Natural killer cell (primary cell): ENCODE measurements at regions of chr6 and their contacts with region 1.

Region 1: GRCh38 chr6:31834434-31835198 is 7.1 kb downstream of the HSPA1B start:
- DNase-seq: peak; percentile 78 to 88
- ATAC-seq: peak; percentile 72 to 84 (median 74)
- H3K4me3 ChIP-seq: peak overlapping the region; percentile 97
- H3K4me3 Mint-ChIP-seq: peak overlapping the region; percentile 88
- H3K27ac ChIP-seq: peak overlapping the region; percentile 98
- H3K27ac Mint-ChIP-seq: peak overlapping the region; percentile 94 to 96
- H3K4me1 ChIP-seq: peaks cover 67% of the 10 kb centered on the region
- H3K4me1 Mint-ChIP-seq: peaks cover 47 to 48% of the 10 kb centered on the region in 2 donors
- H3K27me3 ChIP-seq: no peaks in the 10 kb centered on the region
- H3K27me3 Mint-ChIP-seq: no peaks in the 10 kb centered on the region
- CTCF ChIP-seq: no peak

Region 2: GRCh38 chr6:31541658-31542521 is 292.7 kb before region 1 on chr6 and contains the start of gene DDX39B:
- intact Hi-C with region 1: loop called (anchors 5 kb)
- DNase-seq: peak; percentile 85 to 99
- ATAC-seq: peak; percentile 69 to 86 (median 77)
- H3K4me3 ChIP-seq: peak within 1 kb of the TSS; percentile 77
- H3K4me3 Mint-ChIP-seq: peak within 1 kb of the TSS; percentile 99
- H3K27ac ChIP-seq: peak within 1 kb of the TSS; percentile 92
- H3K27ac Mint-ChIP-seq: peak within 1 kb of the TSS; percentile 94 to 96
- H3K4me1 ChIP-seq: peaks cover 36% of the 10 kb centered on the region
- H3K4me1 Mint-ChIP-seq: peaks cover 49 to 56% of the 10 kb centered on the region in 2 donors
- H3K27me3 ChIP-seq: no peaks in the 10 kb centered on the region
- H3K27me3 Mint-ChIP-seq: no peaks in the 10 kb centered on the region
- CTCF ChIP-seq: no peak
- total RNA-seq, gene DDX39B: 506 to 571 (median 534) TPM

Region 3: GRCh38 chr6:31680840-31681671 is 153.6 kb before region 1 on chr6 and contains the start of gene LY6G5C:
- intact Hi-C with region 1: loop called (anchors 1 kb)
- DNase-seq: peak; percentile 58 to 80
- ATAC-seq: peak; percentile 83 to 89 (median 86)
- H3K4me3 ChIP-seq: peak within 1 kb of the TSS; percentile 56
- H3K4me3 Mint-ChIP-seq: peak within 1 kb of the TSS; percentile 93
- H3K27ac ChIP-seq: peak within 1 kb of the TSS; percentile 14
- H3K27ac Mint-ChIP-seq: peak within 1 kb of the TSS; percentile 78 to 79
- H3K4me1 ChIP-seq: peaks cover 30% of the 10 kb centered on the region
- H3K4me1 Mint-ChIP-seq: peaks cover 19 to 23% of the 10 kb centered on the region in 2 donors
- H3K27me3 ChIP-seq: no peaks in the 10 kb centered on the region
- H3K27me3 Mint-ChIP-seq: peaks cover 0 to 3% of the 10 kb centered on the region in 2 donors
- CTCF ChIP-seq: peak; percentile 64
- total RNA-seq, gene LY6G5C: 2.0 to 7.9 (median 2.7) TPM

Region 4: GRCh38 chr6:31739639-31740396 is 94.8 kb before region 1 on chr6 and contains the start of gene MSH5:
- intact Hi-C with region 1: loop called (anchors 2 kb)
- DNase-seq: peak; percentile 95 to 97
- ATAC-seq: peak; percentile 74 to 95 (median 89)
- H3K4me3 ChIP-seq: peak within 1 kb of the TSS; percentile 66
- H3K4me3 Mint-ChIP-seq: peak within 1 kb of the TSS; percentile 97
- H3K27ac ChIP-seq: peak within 1 kb of the TSS; percentile 83
- H3K27ac Mint-ChIP-seq: peak within 1 kb of the TSS; percentile 91 to 99
- H3K4me1 ChIP-seq: peaks cover 44% of the 10 kb centered on the region
- H3K4me1 Mint-ChIP-seq: peaks cover 60 to 71% of the 10 kb centered on the region in 2 donors
- H3K27me3 ChIP-seq: no peaks in the 10 kb centered on the region
- H3K27me3 Mint-ChIP-seq: no peaks in the 10 kb centered on the region
- CTCF ChIP-seq: no peak
- total RNA-seq, gene MSH5: 28.2 to 44.6 (median 43.7) TPM

Region 5: DNA sequence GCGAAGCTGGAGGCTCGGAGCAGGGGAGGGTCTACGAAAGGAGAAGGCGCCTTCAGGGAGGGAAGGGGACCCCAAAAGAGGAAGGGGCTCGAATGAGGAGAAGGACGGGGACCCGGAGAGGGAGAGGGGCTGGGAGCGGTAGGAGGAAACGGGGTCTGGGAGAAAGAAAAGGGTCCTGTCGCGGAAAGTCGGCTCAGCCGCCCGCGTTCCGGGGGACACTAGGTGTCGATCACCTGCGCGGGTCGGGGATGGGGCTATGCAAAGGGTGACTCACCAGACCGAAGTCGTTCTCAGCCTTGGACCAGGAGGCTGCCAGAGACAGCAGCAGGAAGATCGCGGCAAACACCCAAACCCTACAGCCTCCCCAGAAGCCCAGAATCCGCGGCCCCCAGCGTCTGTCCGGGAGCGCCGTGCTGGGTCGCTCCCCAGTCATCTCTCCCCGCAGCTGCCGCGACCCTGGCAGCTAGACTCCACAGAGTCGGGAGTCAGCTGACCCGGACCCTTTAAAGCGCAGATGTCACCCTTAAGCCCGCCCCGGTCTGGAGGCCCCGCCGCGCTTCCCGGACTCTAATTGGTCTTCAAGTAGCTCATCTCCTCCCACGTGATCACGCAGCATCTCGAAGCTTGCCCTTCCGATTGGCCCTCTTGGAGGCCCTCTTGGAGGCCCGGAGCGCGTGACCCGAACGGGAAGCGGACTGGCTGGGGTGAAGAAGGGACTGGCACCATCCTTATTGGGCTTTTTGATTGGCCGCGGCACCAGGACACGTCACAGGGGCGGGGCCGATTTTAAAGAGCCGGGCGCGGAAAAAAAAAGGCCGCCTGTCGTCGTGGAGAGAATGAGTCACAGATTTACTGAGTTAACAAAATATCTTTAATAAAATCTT is 28.0 kb after region 1 on chr6 and contains the start of gene NEU1:
- intact Hi-C with region 1: loop called (anchors 1 kb)
- DNase-seq: peak; percentile 99 to 100
- ATAC-seq: peak; percentile 86 to 98 (median 93)
- H3K4me3 ChIP-seq: peak within 1 kb of the TSS; percentile 89
- H3K4me3 Mint-ChIP-seq: peak within 1 kb of the TSS; percentile 96
- H3K27ac ChIP-seq: peak within 1 kb of the TSS; percentile 91
- H3K27ac Mint-ChIP-seq: peak within 1 kb of the TSS; percentile 97 to 99
- H3K4me1 ChIP-seq: peaks cover 25% of the 10 kb centered on the region
- H3K4me1 Mint-ChIP-seq: peaks cover 20 to 33% of the 10 kb centered on the region in 2 donors
- H3K27me3 ChIP-seq: no peaks in the 10 kb centered on the region
- H3K27me3 Mint-ChIP-seq: no peaks in the 10 kb centered on the region
- CTCF ChIP-seq: no peak
- total RNA-seq, gene NEU1: 36.1 to 69.6 (median 51.5) TPM

Region 6: DNA sequence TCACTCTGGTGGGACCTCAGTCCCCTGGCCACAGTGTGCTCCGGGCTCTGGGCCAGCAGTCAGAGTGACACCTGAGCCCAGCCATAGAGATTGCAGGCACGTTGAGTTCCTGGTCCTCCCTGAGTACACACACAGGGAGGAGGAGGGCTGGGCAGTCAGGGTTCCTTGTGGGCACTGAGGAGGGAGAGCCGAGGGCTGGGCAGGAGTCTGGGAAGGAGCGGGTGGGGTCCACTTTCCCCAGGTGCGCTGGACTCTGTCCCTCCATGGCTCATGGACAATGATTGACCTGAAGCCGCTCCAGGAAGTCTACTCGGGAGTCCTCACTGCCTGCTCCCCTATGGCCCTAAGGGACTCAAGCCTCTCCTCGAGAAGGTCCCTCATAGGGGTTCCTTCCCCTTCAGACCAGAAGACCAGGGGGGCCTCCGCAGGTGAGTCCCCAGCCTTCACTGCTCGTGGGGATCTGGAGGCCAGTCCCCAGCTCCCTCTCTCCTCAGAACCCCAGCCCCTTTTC is 43.1 kb after region 1 on chr6:
- intact Hi-C with region 1: no loop called
- DNase-seq: no peak
- ATAC-seq: no peak
- H3K4me3 ChIP-seq: no peak overlapping the region
- H3K4me3 Mint-ChIP-seq: no peak overlapping the region
- H3K27ac ChIP-seq: no peak overlapping the region
- H3K27ac Mint-ChIP-seq: peak overlapping the region in 1 of 2 donors; percentile 18
- H3K4me1 ChIP-seq: no peaks in the 10 kb centered on the region
- H3K4me1 Mint-ChIP-seq: peaks cover 0 to 10% of the 10 kb centered on the region in 2 donors
- H3K27me3 ChIP-seq: no peaks in the 10 kb centered on the region
- H3K27me3 Mint-ChIP-seq: no peaks in the 10 kb centered on the region
- CTCF ChIP-seq: no peak

Region 7: GRCh38 chr6:31901953-31902643 is 67.5 kb after region 1 on chr6 and contains the start of gene ZBTB12:
- intact Hi-C with region 1: no loop called
- DNase-seq: peak; percentile 74 to 93
- ATAC-seq: peak; percentile 59 to 75 (median 66)
- H3K4me3 ChIP-seq: peak within 1 kb of the TSS; percentile 71
- H3K4me3 Mint-ChIP-seq: peak within 1 kb of the TSS; percentile 82
- H3K27ac ChIP-seq: peak within 1 kb of the TSS; percentile 65
- H3K27ac Mint-ChIP-seq: peak within 1 kb of the TSS; percentile 2 to 56
- H3K4me1 ChIP-seq: peaks cover 45% of the 10 kb centered on the region
- H3K4me1 Mint-ChIP-seq: peaks cover 27 to 42% of the 10 kb centered on the region in 2 donors
- H3K27me3 ChIP-seq: no peaks in the 10 kb centered on the region
- H3K27me3 Mint-ChIP-seq: peaks cover 0 to 5% of the 10 kb centered on the region in 2 donors
- CTCF ChIP-seq: no peak
- total RNA-seq, gene ZBTB12: 0.54 to 0.77 (median 0.63) TPM